A549 (cell line): ENCODE measurements at regions of chr4 and their contacts with region 1.

Region 1: GRCh38 chr4:183098723-183099536 is at the start of gene WWC2:
- DNase-seq: peak; percentile 69 to 91
- ATAC-seq: peak; percentile 85 to 92
- H3K4me3 ChIP-seq: peak within 1 kb of the TSS; percentile 98
- H3K27ac ChIP-seq: peak within 1 kb of the TSS; percentile 99
- H3K4me1 ChIP-seq: peaks cover 32% of the 10 kb centered on the region
- CTCF ChIP-seq: no peak
- EP300 ChIP-seq: no peak
- POLR2A ChIP-seq: peak; percentile 58
- RAD21 ChIP-seq: no peak; a peak in 1 of 5 replicates
- polyA plus RNA-seq, gene WWC2: 22.5 and 26.9 TPM in 2 replicates

Region 2: DNA sequence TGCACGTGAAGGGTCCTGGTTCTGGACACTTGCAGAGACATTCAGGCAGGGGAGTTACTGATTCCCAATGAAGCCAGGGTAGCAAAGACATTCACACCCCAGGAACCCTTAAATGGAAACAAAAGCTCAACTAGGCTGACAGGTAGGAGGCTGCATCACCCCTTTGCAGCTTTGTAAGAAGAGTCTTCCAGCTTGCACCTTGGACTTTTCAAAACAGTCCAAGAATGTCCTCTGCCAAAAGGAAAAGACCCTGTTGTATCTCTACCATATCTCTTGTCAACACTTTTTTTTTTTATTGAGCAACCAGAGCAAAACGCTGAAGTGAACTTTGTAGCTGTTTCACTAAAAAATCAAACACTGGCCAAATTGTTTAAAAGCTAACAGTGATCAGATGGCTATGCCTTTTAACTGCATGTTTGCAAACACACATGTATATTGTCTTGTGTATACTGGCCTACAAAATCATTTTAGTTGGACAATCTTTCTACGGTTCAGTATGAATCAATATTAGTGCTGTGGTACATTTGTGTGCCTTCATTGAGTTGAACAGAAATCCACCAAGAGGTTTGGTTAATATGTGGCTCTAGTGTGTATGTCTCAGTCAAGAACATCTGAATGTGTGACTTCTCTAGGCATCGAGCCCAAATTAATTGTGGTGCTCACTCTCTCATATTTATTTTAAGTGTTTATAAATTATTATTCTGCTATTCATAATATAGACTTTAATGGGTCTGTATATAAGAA is 18.4 kb before region 1 on chr4:
- CTCF ChIA-PET with region 1: no interaction called
- POLR2A ChIA-PET with region 1: interaction called, 10 read pairs
- DNase-seq: no peak
- ATAC-seq: no peak
- H3K4me3 ChIP-seq: no peak overlapping the region
- H3K27ac ChIP-seq: no peak overlapping the region
- H3K4me1 ChIP-seq: peaks cover 7% of the 10 kb centered on the region; the same call in 1 of the 3 replicates
- CTCF ChIP-seq: no peak
- EP300 ChIP-seq: no peak
- POLR2A ChIP-seq: no peak
- RAD21 ChIP-seq: no peak

Region 3: GRCh38 chr4:183249857-183250256 is 150.9 kb after region 1 on chr4:
- CTCF ChIA-PET with region 1: interaction called, 13 read pairs
- POLR2A ChIA-PET with region 1: interaction called, 5 read pairs
- DNase-seq: peak; percentile 11 to 39
- ATAC-seq: peak; percentile 54 to 86; a peak in 4 of 6 replicates
- H3K4me3 ChIP-seq: no peak overlapping the region
- H3K27ac ChIP-seq: no peak overlapping the region
- H3K4me1 ChIP-seq: no peaks in the 10 kb centered on the region
- CTCF ChIP-seq: peak; percentile 55
- EP300 ChIP-seq: no peak
- POLR2A ChIP-seq: no peak
- RAD21 ChIP-seq: peak; percentile 72 to 80